ENCODE measurements at regions of chr16 and their contacts with region 1.

Region 1: GRCh38 chr16:47141773-47142485 is 1.8 kb downstream of the NETO2 start:
- DNase-seq: peak; percentile 89
- H3K4me3 Mint-ChIP-seq: peak overlapping the region; percentile 81
- H3K27ac Mint-ChIP-seq: peak overlapping the region; percentile 32
- H3K4me1 Mint-ChIP-seq: peaks cover 55% of the 10 kb centered on the region
- H3K27me3 Mint-ChIP-seq: peaks cover 14% of the 10 kb centered on the region

Region 2: DNA sequence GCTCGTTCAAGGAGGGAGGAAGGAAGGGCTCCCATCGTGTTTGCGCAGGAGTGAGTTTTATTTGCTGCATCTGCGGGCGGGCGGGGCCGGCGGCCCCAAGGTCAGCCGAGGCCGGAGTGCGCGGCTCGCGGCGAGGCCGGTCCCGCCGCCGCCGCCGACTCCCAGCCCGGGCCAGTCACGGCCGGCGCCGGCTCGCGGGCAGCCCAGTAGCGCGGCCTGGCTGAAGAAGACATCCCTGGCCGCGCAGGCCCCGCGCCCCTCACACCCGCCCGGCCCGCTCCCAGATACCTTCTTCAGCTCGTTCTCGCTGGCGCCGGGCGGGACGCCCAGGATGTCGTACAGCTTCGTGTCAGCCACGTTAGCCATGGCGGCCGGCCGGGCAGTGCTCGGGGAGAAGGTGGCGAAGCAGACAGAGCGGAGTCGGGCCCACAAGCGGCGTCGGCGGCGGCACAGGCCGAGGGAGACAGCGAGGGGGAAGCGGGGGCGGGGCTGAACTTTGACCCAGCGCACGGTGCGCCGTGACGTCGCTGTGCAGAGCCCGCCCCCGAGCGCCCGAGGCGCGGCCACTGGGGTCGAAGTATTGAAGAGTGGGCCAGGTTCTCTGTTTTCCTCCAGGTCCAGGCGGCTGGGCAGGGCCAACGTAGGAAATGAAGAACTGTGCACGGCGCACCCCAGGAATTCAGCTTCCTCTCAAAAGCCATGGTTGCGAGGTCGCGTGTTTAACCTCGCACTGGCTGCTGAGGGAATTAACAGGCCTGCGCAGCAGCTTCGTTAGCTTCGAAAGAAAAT is 168.5 kb before region 1 on chr16 and contains the start of gene DNAJA2:
- CTCF ChIA-PET with region 1: interaction called, 45 read pairs
- POLR2A ChIA-PET with region 1: interaction called, 29 read pairs
- DNase-seq: peak; percentile 91
- H3K4me3 Mint-ChIP-seq: peak within 1 kb of the TSS; percentile 91
- H3K27ac Mint-ChIP-seq: peak within 1 kb of the TSS; percentile 95
- H3K4me1 Mint-ChIP-seq: peaks cover 55% of the 10 kb centered on the region
- H3K27me3 Mint-ChIP-seq: no peaks in the 10 kb centered on the region
- total RNA-seq, gene DNAJA2: 61.2 to 64.3 TPM

Region 3: GRCh38 chr16:47046726-47047523 is 95.0 kb before region 1 on chr16:
- CTCF ChIA-PET with region 1: interaction called, 10 read pairs
- POLR2A ChIA-PET with region 1: no interaction called
- DNase-seq: no peak
- H3K4me3 Mint-ChIP-seq: no peak overlapping the region
- H3K27ac Mint-ChIP-seq: no peak overlapping the region
- H3K4me1 Mint-ChIP-seq: peaks cover 20% of the 10 kb centered on the region
- H3K27me3 Mint-ChIP-seq: no peaks in the 10 kb centered on the region

Region 4: GRCh38 chr16:47125757-47126156 is 16.2 kb before region 1 on chr16:
- CTCF ChIA-PET with region 1: interaction called, 23 read pairs
- POLR2A ChIA-PET with region 1: interaction called, 3 read pairs
- DNase-seq: no peak
- H3K4me3 Mint-ChIP-seq: no peak overlapping the region
- H3K27ac Mint-ChIP-seq: no peak overlapping the region
- H3K4me1 Mint-ChIP-seq: peaks cover 13% of the 10 kb centered on the region
- H3K27me3 Mint-ChIP-seq: no peaks in the 10 kb centered on the region

Region 5: DNA sequence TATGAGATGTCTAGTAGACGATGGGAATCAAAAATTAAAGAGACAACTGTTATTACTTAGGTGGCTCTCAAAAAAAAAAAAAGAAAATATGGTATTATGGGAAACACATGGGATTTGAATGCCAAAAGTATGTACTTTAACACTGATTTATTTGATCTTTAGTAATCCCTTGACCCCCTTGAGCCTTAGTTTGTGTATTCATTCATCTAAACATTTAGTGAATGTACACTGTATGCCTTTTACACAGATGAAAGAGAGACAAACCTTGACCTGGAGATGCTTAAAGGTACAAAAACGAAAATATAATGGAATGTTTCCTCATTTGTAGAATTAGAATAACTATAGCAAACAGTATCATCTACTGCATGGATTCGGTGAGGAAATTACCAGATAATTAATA is 40.4 kb after region 1 on chr16:
- CTCF ChIA-PET with region 1: no interaction called
- POLR2A ChIA-PET with region 1: no interaction called
- DNase-seq: no peak
- H3K4me3 Mint-ChIP-seq: no peak overlapping the region
- H3K27ac Mint-ChIP-seq: no peak overlapping the region
- H3K4me1 Mint-ChIP-seq: no peaks in the 10 kb centered on the region
- H3K27me3 Mint-ChIP-seq: no peaks in the 10 kb centered on the region

Region 6: GRCh38 chr16:47413041-47413440 is 271.1 kb after region 1 on chr16:
- CTCF ChIA-PET with region 1: no interaction called
- POLR2A ChIA-PET with region 1: no interaction called
- DNase-seq: no peak
- H3K4me3 Mint-ChIP-seq: no peak overlapping the region
- H3K27ac Mint-ChIP-seq: no peak overlapping the region
- H3K4me1 Mint-ChIP-seq: peaks cover 18% of the 10 kb centered on the region
- H3K27me3 Mint-ChIP-seq: no peaks in the 10 kb centered on the region

Region 7: DNA sequence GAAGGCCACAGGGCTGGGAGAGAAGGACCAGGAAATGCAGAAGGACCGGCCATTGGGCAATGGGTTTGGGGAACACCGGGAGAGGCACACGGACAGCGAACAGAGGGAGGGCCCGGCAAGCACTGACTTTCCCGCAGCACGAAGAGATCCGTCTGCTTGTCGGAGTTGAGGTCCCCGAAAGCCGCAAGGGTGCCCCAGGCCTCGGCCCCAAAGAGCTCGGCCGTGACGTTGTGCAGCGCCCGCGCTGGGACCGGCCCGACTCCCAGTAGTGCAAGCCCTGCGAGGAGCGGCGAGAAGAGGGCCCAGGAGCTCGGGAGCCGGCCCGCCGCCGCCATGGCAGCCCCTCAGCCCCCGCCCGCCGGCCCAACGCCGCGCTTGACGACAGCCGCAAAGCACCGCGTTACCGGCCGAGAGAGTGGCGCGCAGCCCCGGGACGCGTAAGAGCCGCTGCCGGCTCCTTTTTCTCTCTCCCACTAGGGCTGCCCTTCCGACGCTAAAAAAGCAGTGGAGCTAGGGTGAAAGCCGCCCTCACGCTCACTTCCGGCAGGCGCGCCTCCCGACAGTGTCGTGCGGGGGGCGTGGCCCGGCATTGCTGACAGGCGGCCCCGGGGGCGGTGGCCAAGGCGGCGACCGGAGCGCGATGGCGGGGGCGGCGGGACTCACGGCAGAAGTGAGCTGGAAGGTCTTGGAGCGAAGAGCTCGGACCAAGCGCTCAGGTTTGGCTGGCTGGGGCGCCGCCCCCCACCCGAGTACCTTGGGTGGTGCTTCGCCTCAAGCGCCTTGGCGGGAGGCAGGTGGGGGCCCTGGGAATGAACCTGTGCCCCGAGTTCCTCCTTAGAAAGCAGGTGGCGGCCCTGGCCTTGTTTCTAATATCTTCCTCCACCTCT is 319.0 kb after region 1 on chr16 and contains the starts of genes ITFG1 and PHKB:
- CTCF ChIA-PET with region 1: interaction called, 38 read pairs
- POLR2A ChIA-PET with region 1: interaction called, 13 read pairs
- DNase-seq: peak; percentile 96
- H3K4me3 Mint-ChIP-seq: peak within 1 kb of the TSS; percentile 95
- H3K27ac Mint-ChIP-seq: peak within 1 kb of the TSS; percentile 93
- H3K4me1 Mint-ChIP-seq: peaks cover 52% of the 10 kb centered on the region
- H3K27me3 Mint-ChIP-seq: no peaks in the 10 kb centered on the region
- total RNA-seq, gene ITFG1: 27.9 to 28.8 TPM
- total RNA-seq, gene PHKB: 33.2 to 36.3 TPM

Measured in activated CD4-positive, alpha-beta memory T cell treated with anti-CD3 and anti-CD28 coated beads, Interleukin-2, amount 10 ng/mL, durations not matched to agents 7 days and 5 days (primary cell).